HCT116 (cell line): ENCODE measurements at regions of chr5 and their contacts with region 1.

Region 1: GRCh38 chr5:39578887-39579497 is 154.2 kb upstream of the DAB2 start:
- DNase-seq: peak; percentile 18
- ATAC-seq: no peak
- H3K4me3 ChIP-seq: no peak overlapping the region
- H3K27ac ChIP-seq: no peak overlapping the region
- H3K4me1 ChIP-seq: no peaks in the 10 kb centered on the region
- H3K27me3 ChIP-seq: no peaks in the 10 kb centered on the region
- CTCF ChIP-seq: peak; percentile 16 to 59 (median 19); a peak in 3 of 6 replicates
- POLR2A ChIP-seq: no peak
- RAD21 ChIP-seq: peak; percentile 62

Region 2: GRCh38 chr5:39691993-39692392 is 113.0 kb after region 1 on chr5:
- CTCF ChIA-PET with region 1: no interaction called
- POLR2A ChIA-PET with region 1: no interaction called
- RAD21 ChIA-PET with region 1: no interaction called
- intact Hi-C with region 1: loop called (anchors 5 kb)
- DNase-seq: peak; percentile 15
- ATAC-seq: peak; percentile 84
- H3K4me3 ChIP-seq: no peak overlapping the region
- H3K27ac ChIP-seq: no peak overlapping the region
- H3K4me1 ChIP-seq: no peaks in the 10 kb centered on the region
- H3K27me3 ChIP-seq: no peaks in the 10 kb centered on the region
- CTCF ChIP-seq: peak; percentile 33 to 53 (median 37); a peak in 4 of 6 replicates
- POLR2A ChIP-seq: no peak
- RAD21 ChIP-seq: peak; percentile 48